ENCODE measurements at regions of chr1 and their contacts with region 1.

Region 1: DNA sequence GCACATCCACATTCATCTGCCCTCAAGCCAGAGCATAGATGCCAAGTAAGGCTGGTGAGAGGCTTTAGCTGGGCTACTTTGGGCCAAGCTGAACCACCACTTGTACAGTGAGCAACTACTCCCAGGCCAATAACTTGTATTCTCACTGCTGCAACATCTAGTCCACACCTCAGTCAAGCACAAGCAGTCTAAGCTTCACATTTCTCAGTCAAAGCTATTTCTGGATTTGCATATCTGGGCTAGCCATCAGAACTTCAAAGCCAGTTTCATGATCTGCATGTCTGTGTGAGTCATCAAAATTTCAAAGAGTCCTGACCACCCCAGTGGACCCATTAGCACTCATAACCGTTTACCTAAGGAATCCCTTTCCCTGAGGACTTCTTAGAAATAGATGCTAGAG is 77.7 kb upstream of the DIRAS3 start:
- DNase-seq: no peak
- H3K4me3 ChIP-seq: no peak overlapping the region
- H3K27ac ChIP-seq: peak overlapping the region in 1 of 2 donors; percentile 33
- H3K4me1 ChIP-seq: peaks cover 0 to 4% of the 10 kb centered on the region in 2 donors
- H3K27me3 ChIP-seq: no peaks in the 10 kb centered on the region
- CTCF ChIP-seq: no peak

Region 2: DNA sequence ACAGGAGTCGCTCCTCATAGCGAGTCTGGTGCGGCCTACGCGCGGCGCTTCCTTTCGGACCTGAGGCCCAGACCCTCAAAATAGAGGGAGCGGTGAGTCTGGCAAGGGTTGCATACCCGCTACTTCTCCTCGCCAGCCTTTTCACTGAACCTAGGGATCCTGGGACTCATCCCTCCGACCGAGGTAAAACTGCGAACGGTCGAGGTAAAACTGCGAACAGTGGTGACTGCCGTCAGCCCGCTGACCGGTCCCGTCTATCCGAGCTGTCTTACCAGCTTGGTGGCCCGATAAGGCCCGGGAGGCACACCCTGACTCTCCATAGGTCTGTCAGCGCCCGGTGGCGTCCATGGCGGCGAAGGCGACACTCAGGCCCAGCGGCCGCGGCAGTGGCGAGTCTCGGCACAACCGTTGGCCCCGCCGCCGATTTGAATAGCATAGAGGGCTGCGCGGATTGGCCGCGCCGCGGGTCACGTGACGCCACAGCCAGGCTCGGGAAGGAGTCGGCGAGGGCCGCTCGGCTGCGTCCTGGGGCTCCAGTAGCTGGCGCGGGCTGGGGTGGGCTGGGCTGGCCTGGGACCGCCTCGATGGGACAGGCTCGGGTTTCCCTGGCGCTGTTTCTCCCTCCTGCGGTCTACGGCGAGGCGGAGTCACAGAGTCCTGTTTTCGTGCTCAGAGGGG is 368.7 kb after region 1 on chr1 and contains the start of gene DEPDC1:
- intact Hi-C with region 1: loop called (anchors 5 kb)
- DNase-seq: peak; percentile 86 to 96
- H3K4me3 ChIP-seq: peak within 1 kb of the TSS; percentile 59 to 69
- H3K27ac ChIP-seq: peak within 1 kb of the TSS; percentile 25 to 39
- H3K4me1 ChIP-seq: peaks cover 2 to 7% of the 10 kb centered on the region in 2 donors
- H3K27me3 ChIP-seq: no peaks in the 10 kb centered on the region
- CTCF ChIP-seq: peak in 1 of 3 experiments; percentile 5
- total RNA-seq, gene DEPDC1: not detected